Ascending aorta (tissue), 2 donors: ENCODE measurements at regions of chr10 and their contacts with region 1.

Region 1: GRCh38 chr10:93702211-93703001 is at the start of gene FRA10AC1:
- DNase-seq: peak; percentile 65 to 96
- H3K4me3 ChIP-seq: peak within 1 kb of the TSS; percentile 65 to 74
- H3K27ac ChIP-seq: peak within 1 kb of the TSS; percentile 86 to 89
- H3K4me1 ChIP-seq: peaks cover 0 to 4% of the 10 kb centered on the region in 2 donors
- H3K27me3 ChIP-seq: no peaks in the 10 kb centered on the region
- CTCF ChIP-seq: peak; percentile 59 to 73 (median 73)
- total RNA-seq, gene FRA10AC1: 1.7 TPM

Region 2: GRCh38 chr10:92592761-92593618 is 1109.4 kb before region 1 on chr10 and contains the start of gene KIF11:
- intact Hi-C with region 1: loop called (anchors 5 kb)
- DNase-seq: peak; percentile 94 to 99
- H3K4me3 ChIP-seq: peak within 1 kb of the TSS; percentile 58 to 70
- H3K27ac ChIP-seq: peak within 1 kb of the TSS; percentile 92 to 96
- H3K4me1 ChIP-seq: peaks cover 4 to 5% of the 10 kb centered on the region in 2 donors
- H3K27me3 ChIP-seq: no peaks in the 10 kb centered on the region
- CTCF ChIP-seq: no peak
- total RNA-seq, gene KIF11: not detected

Region 3: GRCh38 chr10:93687737-93688136 is 14.7 kb before region 1 on chr10:
- intact Hi-C with region 1: no loop called
- DNase-seq: no peak
- H3K4me3 ChIP-seq: no peak overlapping the region
- H3K27ac ChIP-seq: no peak overlapping the region
- H3K4me1 ChIP-seq: no peaks in the 10 kb centered on the region
- H3K27me3 ChIP-seq: no peaks in the 10 kb centered on the region
- CTCF ChIP-seq: no peak

Region 4: DNA sequence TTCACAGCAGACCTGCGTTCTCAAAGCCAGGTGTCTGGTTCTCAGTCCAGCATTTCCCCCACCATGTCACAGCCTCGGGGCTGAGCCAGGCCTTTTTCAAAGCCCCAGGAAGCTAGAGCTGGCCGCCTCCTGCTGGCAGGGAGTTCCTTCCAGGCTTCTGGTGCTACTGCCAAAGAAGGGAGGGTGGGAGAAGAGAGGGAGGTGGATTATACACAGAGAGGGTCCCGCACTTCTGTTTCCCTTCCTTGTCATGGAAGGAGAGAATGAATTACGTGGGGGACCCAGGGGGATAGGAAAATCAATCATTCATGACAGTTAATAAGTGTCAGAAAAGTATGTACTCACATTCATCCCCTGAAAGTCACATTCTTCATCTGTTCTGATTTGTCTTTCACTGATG is 54.7 kb after region 1 on chr10:
- intact Hi-C with region 1: loop called (anchors 2 kb)
- DNase-seq: no peak
- H3K4me3 ChIP-seq: peak overlapping the region in 1 of 2 donors; percentile 65
- H3K27ac ChIP-seq: peak overlapping the region; percentile 44 to 49
- H3K4me1 ChIP-seq: peaks cover 0 to 3% of the 10 kb centered on the region in 2 donors
- H3K27me3 ChIP-seq: no peaks in the 10 kb centered on the region
- CTCF ChIP-seq: peak in 1 of 3 experiments; percentile 33

Region 5: DNA sequence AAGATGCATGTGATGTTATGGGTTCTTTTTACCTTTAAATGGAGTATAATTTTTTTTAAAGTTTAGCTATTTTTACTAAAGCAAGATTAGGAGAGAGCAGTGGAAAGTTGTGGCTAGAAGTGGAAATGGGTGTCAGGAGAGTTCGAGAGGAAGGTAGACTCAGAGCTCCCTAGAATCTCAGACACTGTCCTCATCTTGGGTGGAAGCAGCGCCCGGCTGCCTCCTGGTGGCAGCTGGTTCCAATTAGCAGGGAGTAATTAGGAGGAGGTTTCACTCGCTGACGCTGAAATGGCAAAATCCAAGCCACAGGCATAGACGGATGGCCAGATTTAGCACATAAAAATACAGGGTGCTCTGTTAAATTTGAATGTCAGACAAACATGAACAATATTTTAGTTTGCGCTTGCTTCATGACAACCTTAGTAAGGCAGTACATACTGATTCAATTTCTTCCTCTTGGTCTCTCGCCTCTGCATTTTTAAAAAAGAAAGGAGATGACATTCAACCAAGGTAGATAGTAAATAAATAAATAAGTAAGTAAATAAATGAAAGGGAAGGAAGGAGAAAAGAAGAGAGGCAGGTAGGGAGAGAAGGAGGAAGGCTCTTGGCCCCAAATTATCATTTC is 113.8 kb after region 1 on chr10:
- intact Hi-C with region 1: loop called (anchors 1 kb)
- DNase-seq: peak in 1 of 2 donors; percentile 83
- H3K4me3 ChIP-seq: peak overlapping the region in 1 of 2 donors; percentile 44
- H3K27ac ChIP-seq: peak overlapping the region in 1 of 2 donors; percentile 20
- H3K4me1 ChIP-seq: no peaks in the 10 kb centered on the region
- H3K27me3 ChIP-seq: no peaks in the 10 kb centered on the region
- CTCF ChIP-seq: peak; percentile 50 to 82 (median 67)